Sigmoid colon (tissue), 7 donors: ENCODE measurements at regions of chr14 and their contacts with region 1.

Region 1: GRCh38 chr14:104137297-104138097 is 890 bp upstream of the KIF26A start:
- DNase-seq: no peak
- H3K4me3 ChIP-seq: peak overlapping the region; percentile 24 to 56 (median 50)
- H3K27ac ChIP-seq: peak overlapping the region in 3 of 4 donors; percentile 5 to 32 (median 27)
- H3K4me1 ChIP-seq: peaks cover 0 to 45% (median 39%) of the 10 kb centered on the region in 4 donors
- H3K27me3 ChIP-seq: peaks cover 37 to 70% (median 59%) of the 10 kb centered on the region in 3 donors
- CTCF ChIP-seq: peak; percentile 41 to 95 (median 61)
- EP300 ChIP-seq: no peak
- POLR2A ChIP-seq: no peak

Region 2: DNA sequence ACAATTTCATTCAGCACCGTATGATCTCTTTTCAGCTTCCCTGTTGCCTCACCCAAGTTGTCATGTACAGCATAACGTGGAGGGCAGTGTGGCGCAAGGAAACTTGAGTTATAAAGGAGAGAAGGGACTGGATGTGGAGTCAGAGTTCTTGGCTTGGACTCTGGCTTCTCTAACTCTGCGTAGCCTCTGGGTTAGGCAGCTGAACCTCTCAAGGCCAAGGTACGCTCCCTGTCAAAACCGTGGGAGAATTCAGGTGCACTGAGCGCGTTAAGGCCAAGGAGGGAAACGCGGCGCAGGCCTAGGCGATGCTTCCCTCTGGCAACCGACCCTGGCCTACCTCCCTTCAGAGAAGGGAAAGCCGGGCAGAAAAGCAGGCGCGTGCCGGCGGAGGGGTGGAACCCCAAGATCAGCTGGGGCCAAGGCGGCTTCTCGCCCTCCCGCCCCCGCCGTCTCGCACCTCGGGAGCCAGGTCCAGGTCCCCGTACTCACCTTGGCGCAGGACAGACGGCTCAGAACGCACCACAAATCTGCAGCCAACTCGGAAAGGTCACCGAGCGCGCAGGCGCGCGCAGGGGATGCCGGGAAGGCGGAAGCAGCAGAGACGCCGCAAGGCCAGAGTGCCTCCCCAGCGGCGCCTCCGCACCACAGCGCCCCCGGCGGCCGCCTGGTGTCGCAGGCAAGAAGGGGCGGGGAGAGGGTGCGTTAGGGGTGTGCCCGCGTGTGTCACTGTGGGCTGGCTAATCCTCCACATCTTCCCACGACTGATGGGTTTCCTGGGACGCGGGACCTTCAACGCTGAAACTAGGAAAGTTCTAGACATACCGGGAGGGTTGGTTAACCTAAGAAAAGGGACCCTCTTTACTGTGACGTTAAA is 216.3 kb before region 1 on chr14:
- intact Hi-C with region 1: no loop called
- DNase-seq: peak; percentile 94
- H3K4me3 ChIP-seq: peak overlapping the region; percentile 84 to 99 (median 86)
- H3K27ac ChIP-seq: peak overlapping the region; percentile 82 to 90 (median 84)
- H3K4me1 ChIP-seq: peaks cover 0 to 42% (median 32%) of the 10 kb centered on the region in 4 donors
- H3K27me3 ChIP-seq: peaks cover 0 to 17% (median 0%) of the 10 kb centered on the region in 3 donors
- CTCF ChIP-seq: peak; percentile 63 to 98 (median 84)
- EP300 ChIP-seq: peak in 1 of 4 donors; percentile 41
- POLR2A ChIP-seq: peak; percentile 56 to 64

Region 3: GRCh38 chr14:104563742-104564615 is 426.5 kb after region 1 on chr14:
- intact Hi-C with region 1: loop called (anchors 1 kb)
- DNase-seq: peak; percentile 81
- H3K4me3 ChIP-seq: no peak overlapping the region
- H3K27ac ChIP-seq: no peak overlapping the region
- H3K4me1 ChIP-seq: peaks cover 0 to 9% (median 4%) of the 10 kb centered on the region in 4 donors
- H3K27me3 ChIP-seq: peaks cover 0 to 56% (median 35%) of the 10 kb centered on the region in 3 donors
- CTCF ChIP-seq: peak; percentile 58 to 92 (median 73)
- EP300 ChIP-seq: no peak
- POLR2A ChIP-seq: no peak

Region 4: DNA sequence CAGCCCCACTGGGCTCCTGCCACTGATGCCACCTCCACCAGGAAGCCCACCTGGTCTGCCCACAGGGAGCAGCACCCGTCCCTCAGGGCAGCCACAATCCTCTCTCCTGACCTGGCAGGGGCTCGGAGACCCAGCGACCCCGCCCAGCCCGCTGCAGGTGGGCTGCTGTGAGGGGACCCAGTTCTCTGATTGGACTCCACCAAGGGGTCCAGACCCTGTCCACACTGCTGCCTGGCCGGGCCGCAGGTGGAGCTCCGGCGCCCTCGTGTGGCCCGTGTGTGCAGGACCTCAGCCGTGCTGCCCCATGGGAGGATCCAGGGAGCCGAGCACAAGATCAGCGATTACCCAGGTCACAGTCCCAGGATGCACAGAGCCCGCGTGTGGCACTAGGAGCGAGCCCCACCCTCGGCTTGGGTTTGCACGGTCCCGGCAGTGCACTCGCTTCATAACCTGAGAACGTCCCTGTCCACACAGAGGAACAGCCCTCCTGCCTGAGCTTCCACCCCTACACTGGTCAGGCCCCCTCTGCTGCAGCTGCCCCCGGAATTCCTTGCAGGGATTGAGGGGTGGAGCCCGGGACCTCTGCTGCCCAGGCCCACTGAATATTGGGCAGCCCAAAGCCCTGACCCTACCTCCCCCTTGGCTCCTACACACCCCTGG is 502.5 kb after region 1 on chr14:
- intact Hi-C with region 1: loop called (anchors 1 kb)
- DNase-seq: peak; percentile 72
- H3K4me3 ChIP-seq: no peak overlapping the region
- H3K27ac ChIP-seq: no peak overlapping the region
- H3K4me1 ChIP-seq: peaks cover 0 to 7% (median 3%) of the 10 kb centered on the region in 4 donors
- H3K27me3 ChIP-seq: peaks cover 0 to 33% (median 3%) of the 10 kb centered on the region in 3 donors
- CTCF ChIP-seq: peak; percentile 56 to 83 (median 67)
- EP300 ChIP-seq: no peak
- POLR2A ChIP-seq: no peak